ENCODE measurements at regions of chr4 and their contacts with region 1.

Region 1: GRCh38 chr4:121668368-121669162 is 28.2 kb downstream of the ANXA5 start:
- DNase-seq: no peak
- H3K4me3 ChIP-seq: no peak overlapping the region
- H3K27ac ChIP-seq: no peak overlapping the region
- H3K4me1 ChIP-seq: no peaks in the 10 kb centered on the region
- H3K27me3 ChIP-seq: no peaks in the 10 kb centered on the region
- CTCF ChIP-seq: no peak

Region 2: DNA sequence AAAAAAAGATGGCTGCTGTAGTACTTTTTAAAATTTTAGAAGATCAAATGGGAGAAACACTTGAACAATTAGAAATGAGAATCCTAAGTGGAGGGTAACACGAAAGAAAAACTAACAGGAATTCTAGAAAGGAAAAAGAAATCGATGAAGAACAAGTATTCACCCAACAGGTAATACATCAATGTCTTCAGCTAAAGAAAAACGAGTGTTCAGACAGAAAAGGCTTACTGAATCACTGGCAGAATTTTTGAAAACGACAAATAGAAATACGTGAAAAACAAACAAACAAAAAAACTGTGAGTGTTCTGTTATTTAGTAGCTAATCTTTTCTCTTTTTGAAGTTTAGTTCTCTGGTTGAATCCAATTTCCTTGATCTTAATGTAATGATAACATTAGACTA is 1603.7 kb before region 1 on chr4:
- CTCF ChIA-PET with region 1: no interaction called
- POLR2A ChIA-PET with region 1: interaction called, 10 read pairs
- intact Hi-C with region 1: no loop called
- DNase-seq: no peak
- H3K4me3 ChIP-seq: peak overlapping the region; percentile 89; the same call in 1 of the 2 replicates
- H3K27ac ChIP-seq: no peak overlapping the region
- H3K4me1 ChIP-seq: peaks cover 21% of the 10 kb centered on the region
- H3K27me3 ChIP-seq: no peaks in the 10 kb centered on the region
- CTCF ChIP-seq: no peak

Measured in PC-9 (cell line).